Activated CD4-positive, alpha-beta T cell treated with anti-CD3 and anti-CD28 coated beads for 36 hours (primary cell): ENCODE measurements at regions of chr12 and their contacts with region 1.

Region 1: DNA sequence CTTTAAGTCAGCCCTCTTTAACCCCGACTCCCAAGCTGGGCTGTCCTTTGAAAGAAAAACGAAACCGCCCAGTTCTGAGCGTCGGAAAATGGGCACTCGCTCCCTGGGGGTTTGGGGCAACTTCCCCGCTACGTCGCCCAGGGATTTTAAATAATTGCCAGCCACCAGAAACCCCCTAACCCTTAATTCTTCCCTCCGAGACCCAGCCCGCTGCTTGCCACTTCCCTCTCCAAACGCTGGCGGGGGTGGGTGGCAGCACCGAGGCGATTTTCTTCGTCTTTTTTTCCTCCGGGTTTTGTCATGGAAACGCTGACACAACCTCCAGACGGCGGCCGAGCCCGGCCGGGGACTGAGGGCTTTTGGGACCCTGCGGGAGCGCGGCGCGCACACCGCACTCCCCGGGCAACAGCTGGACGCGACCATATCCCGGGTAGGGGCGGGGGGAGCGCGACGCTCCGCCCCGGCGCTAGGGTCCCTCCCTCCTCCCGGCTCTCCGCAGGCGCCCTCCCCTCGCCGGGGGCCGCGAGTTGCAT is at the start of gene CHST11:
- DNase-seq: peak; percentile 88
- ATAC-seq: peak; percentile 76
- H3K4me3 Mint-ChIP-seq: peak within 1 kb of the TSS; percentile 91
- H3K27ac Mint-ChIP-seq: peak within 1 kb of the TSS; percentile 97
- H3K4me1 Mint-ChIP-seq: peaks cover 35% of the 10 kb centered on the region
- H3K27me3 Mint-ChIP-seq: no peaks in the 10 kb centered on the region
- total RNA-seq, gene CHST11: 33.3 to 33.6 TPM

Region 2: GRCh38 chr12:104286538-104287482 is 169.7 kb before region 1 on chr12:
- CTCF ChIA-PET with region 1: no interaction called
- POLR2A ChIA-PET with region 1: no interaction called
- intact Hi-C with region 1: loop called in 1 of 2 experiments (anchors 2 kb)
- DNase-seq: peak; percentile 95
- ATAC-seq: peak; percentile 84
- H3K4me3 Mint-ChIP-seq: peak overlapping the region; percentile 95
- H3K27ac Mint-ChIP-seq: peak overlapping the region; percentile 97
- H3K4me1 Mint-ChIP-seq: peaks cover 12% of the 10 kb centered on the region
- H3K27me3 Mint-ChIP-seq: no peaks in the 10 kb centered on the region

Region 3: DNA sequence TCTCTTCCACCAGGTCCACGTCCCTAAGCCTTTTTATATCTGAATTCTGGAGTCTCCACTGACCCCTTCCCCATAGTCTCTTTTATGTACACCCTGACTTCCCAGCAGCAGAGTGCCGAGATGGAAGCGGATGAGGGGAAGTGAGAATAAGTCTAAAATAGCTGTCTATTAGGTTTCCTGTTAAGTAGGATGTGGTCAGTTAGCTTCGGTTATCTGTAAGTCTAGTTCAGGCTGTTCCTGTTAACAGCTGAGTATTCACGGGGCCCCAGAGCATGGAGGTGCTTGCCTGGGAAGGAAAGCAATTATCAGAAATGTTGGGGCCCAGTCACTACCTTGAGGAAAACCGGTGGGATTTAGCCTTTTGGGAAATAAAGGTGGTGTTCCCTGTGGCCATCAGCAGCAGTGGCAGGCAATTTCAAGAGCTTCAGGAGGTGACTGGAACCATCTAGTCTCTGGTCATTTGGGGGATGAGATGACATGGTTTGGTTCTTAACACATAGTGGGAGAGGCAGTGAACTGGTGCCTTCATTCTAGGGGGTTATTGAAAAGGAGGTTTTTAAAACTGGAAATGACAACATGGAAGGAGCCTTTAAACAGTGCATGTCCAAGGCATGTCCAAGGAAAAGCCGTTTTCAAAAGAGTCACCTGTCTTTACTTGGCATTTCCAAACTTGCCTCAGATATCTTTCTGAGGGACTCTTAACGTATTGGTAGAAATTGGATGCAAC is 22.1 kb after region 1 on chr12:
- CTCF ChIA-PET with region 1: interaction called, 19 read pairs
- POLR2A ChIA-PET with region 1: no interaction called
- intact Hi-C with region 1: no loop called
- DNase-seq: peak; percentile 38
- ATAC-seq: peak; percentile 77
- H3K4me3 Mint-ChIP-seq: peak overlapping the region; percentile 70
- H3K27ac Mint-ChIP-seq: peak overlapping the region; percentile 96
- H3K4me1 Mint-ChIP-seq: peaks cover 80% of the 10 kb centered on the region
- H3K27me3 Mint-ChIP-seq: no peaks in the 10 kb centered on the region

Region 4: GRCh38 chr12:104578453-104578852 is 122.0 kb after region 1 on chr12:
- CTCF ChIA-PET with region 1: no interaction called
- POLR2A ChIA-PET with region 1: no interaction called
- intact Hi-C with region 1: loop called in 1 of 2 experiments (anchors 2 kb)
- DNase-seq: peak; percentile 63
- ATAC-seq: peak; percentile 65
- H3K4me3 Mint-ChIP-seq: no peak overlapping the region
- H3K27ac Mint-ChIP-seq: peak overlapping the region; percentile 8
- H3K4me1 Mint-ChIP-seq: peaks cover 75% of the 10 kb centered on the region
- H3K27me3 Mint-ChIP-seq: no peaks in the 10 kb centered on the region

Region 5: DNA sequence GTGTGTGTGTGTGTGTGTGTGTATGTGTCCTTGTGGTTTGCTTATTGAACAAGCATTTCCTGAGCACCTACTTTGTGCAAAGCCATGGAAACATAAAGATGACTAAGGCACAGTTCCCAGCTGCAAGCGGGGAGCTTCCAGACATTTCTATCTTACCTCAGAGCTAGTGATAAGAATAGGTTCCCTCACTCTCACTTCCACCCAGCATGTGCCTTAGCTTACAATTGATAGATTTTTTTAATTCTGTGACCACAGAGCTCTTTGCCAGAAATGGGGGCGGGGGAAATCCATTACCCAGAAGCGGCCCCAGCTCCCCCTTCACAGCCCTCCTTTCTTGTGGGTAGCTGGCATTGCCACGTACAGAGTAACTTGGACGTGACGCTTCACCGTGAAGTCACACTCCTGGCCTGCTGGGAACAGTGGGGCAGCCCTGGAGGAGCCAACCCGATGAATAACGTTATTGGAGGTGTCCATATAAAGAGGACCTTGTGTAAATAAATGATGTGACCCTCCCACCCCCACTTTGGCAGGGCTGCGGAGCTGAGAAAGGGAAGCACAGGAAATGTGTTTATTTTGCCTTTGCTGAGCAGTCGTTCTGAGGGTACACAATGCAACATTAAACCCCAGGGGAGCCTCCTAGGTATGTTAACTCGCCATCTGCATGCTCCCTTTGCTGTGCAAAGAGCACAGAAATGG is 239.1 kb after region 1 on chr12:
- CTCF ChIA-PET with region 1: no interaction called
- POLR2A ChIA-PET with region 1: interaction called, 3 read pairs
- intact Hi-C with region 1: loop called (anchors 1 to 2 kb)
- DNase-seq: peak; percentile 92
- ATAC-seq: peak; percentile 86
- H3K4me3 Mint-ChIP-seq: peak overlapping the region; percentile 36
- H3K27ac Mint-ChIP-seq: peak overlapping the region; percentile 92
- H3K4me1 Mint-ChIP-seq: peaks cover 69% of the 10 kb centered on the region
- H3K27me3 Mint-ChIP-seq: no peaks in the 10 kb centered on the region